HEK293 (cell line): ENCODE measurements at regions of chr7 and their contacts with region 1.

Region 1: GRCh38 chr7:123705211-123705901 is 43.4 kb downstream of the WASL start:
- H3K4me3 ChIP-seq: no peak overlapping the region
- H3K27ac ChIP-seq: no peak overlapping the region
- H3K4me1 ChIP-seq: peaks cover 5% of the 10 kb centered on the region; the same call in 1 of the 2 replicates
- CTCF ChIP-seq: no peak

Region 2: GRCh38 chr7:123692471-123692877 is 12.9 kb before region 1 on chr7:
- CTCF ChIA-PET with region 1: interaction called, 17 read pairs
- POLR2A ChIA-PET with region 1: no interaction called
- H3K4me3 ChIP-seq: no peak overlapping the region
- H3K27ac ChIP-seq: no peak overlapping the region
- H3K4me1 ChIP-seq: no peaks in the 10 kb centered on the region
- CTCF ChIP-seq: no peak

Region 3: DNA sequence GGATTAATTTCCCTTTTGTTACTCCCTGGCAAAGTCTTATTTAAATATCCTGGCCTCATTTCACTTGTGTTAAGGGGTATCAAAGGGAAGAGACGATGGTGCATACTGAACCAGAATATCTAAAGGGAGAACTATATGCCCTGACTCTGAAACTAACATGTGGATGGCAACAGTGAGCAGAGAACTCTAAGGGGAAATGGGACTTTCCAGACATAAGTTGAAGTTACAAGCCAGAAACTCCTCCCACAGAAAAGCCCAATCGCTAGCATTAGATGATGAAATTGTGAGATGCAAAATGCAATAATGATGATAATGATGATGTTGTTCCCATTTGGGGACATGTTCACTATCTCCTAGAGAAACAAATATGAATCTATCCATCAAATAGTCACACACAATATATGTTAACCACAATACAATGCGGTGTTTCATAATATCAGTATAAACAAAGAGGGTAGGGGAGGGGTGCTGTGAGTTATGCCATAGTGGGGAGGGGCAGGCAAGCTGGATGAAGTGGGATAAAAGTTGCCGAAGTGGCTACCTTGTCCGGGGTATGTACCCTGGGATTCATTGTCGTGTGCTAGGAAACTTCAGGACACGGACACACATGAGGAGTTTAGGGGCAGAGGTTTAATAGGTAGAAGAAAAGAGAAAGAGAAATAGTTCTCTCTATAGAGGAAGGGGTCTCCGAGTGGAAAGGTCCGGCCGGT is 290.4 kb after region 1 on chr7:
- CTCF ChIA-PET with region 1: no interaction called
- POLR2A ChIA-PET with region 1: no interaction called
- H3K4me3 ChIP-seq: no peak overlapping the region
- H3K27ac ChIP-seq: no peak overlapping the region
- H3K4me1 ChIP-seq: no peaks in the 10 kb centered on the region
- CTCF ChIP-seq: no peak